ENCODE measurements at regions of chr3 and their contacts with region 1.

Region 1: DNA sequence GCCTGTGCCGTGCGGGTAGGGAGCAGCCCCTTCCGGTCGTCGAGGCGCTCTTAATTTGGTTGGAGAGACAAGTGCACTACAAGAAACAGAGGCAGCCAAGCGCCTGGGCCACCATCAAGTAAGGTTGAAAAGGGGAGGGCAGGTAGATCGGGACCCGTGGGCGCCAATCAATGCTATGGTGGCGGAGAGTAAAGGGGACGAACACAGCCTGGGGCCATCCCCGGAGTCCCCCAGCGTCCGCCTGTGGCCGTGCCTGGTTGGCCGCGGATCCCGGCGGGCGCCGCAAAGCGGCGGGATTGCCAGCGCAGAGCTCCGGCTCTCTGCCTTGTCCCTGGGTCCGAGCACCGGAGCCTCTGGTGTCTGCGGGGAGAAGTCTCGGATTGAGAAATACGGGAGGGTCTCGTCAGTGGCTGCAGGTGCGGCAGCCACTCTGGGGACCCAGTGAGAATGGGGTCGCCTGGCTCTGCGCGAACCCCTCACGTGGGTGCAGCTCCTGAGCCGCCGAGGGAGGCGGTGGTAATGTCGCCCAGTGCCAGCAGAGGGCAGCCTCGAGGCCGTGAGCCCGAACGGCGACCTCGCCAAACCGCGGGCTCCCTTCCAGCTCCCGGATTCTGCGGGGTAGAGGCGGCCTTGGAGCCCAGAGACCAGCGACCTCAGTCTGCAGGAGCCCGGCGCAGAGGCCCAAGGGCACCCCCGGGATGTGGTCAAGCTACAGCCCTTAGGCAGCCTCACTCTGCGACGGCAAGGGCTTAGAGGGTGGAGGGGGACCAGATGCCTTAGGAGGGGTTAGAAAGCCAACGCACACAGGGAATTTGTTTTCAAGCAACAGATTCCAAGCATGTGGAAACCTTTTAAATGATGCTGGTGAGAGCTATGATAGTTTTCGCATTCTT is 10.8 kb downstream of the FOXL2 start:
- DNase-seq: peak; percentile 85 to 93
- ATAC-seq: peak; percentile 91
- H3K4me3 ChIP-seq: no peak overlapping the region
- H3K27ac ChIP-seq: no peak overlapping the region
- H3K4me1 ChIP-seq: no peaks in the 10 kb centered on the region
- H3K27me3 ChIP-seq: no peaks in the 10 kb centered on the region

Region 2: DNA sequence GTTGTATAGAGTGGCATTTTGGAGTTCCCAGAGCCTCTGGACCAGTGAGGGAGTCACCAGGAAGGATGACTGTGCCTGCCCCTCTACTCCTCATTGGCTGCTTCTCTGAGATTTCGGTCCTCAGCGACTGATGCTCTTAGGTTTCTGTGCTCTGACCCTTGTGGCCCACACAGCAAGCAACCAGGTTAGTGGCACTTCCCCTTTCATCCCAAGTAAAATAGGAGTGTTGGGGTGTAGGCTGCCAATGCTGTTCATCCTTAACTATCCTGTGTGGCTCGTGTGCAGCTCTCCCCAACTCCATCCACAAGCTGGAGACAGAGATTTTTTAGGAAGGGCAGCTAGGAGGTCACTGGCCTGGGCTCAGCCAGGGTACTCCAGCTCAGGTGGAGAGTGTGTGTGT is 48.7 kb after region 1 on chr3:
- intact Hi-C with region 1: loop called in 1 of 2 experiments (anchors 5 kb)
- DNase-seq: no peak
- ATAC-seq: no peak
- H3K4me3 ChIP-seq: no peak overlapping the region
- H3K27ac ChIP-seq: no peak overlapping the region
- H3K4me1 ChIP-seq: no peaks in the 10 kb centered on the region
- H3K27me3 ChIP-seq: no peaks in the 10 kb centered on the region

Region 3: DNA sequence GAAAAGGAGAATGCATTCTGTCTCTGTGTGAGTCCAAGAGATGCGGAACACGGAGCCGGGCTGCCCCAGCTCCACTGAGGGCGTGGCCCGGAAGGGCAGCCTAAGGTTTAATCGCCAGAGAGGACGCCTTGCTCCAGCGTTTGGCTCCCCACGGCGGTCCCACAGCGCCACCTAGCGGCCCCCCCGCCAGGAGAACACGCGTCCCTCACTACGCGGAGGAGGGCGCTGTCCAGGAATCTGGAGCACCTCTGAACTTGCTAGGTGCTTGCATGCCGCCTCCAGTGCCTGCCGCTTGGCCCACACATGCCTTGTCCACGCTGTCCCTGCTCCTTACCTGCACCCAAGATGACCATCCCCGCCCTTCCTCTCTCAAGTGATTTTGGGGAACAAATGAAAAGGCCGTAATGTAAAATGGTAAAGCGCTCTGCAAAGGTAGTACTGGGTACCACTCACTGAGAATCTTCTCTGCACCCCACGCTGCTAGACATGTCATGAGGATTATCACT is 393.3 kb after region 1 on chr3:
- intact Hi-C with region 1: loop called in 1 of 2 experiments (anchors 2 kb)
- DNase-seq: peak; percentile 90 to 96
- ATAC-seq: peak; percentile 91
- H3K4me3 ChIP-seq: no peak overlapping the region
- H3K27ac ChIP-seq: no peak overlapping the region
- H3K4me1 ChIP-seq: no peaks in the 10 kb centered on the region
- H3K27me3 ChIP-seq: no peaks in the 10 kb centered on the region

Region 4: DNA sequence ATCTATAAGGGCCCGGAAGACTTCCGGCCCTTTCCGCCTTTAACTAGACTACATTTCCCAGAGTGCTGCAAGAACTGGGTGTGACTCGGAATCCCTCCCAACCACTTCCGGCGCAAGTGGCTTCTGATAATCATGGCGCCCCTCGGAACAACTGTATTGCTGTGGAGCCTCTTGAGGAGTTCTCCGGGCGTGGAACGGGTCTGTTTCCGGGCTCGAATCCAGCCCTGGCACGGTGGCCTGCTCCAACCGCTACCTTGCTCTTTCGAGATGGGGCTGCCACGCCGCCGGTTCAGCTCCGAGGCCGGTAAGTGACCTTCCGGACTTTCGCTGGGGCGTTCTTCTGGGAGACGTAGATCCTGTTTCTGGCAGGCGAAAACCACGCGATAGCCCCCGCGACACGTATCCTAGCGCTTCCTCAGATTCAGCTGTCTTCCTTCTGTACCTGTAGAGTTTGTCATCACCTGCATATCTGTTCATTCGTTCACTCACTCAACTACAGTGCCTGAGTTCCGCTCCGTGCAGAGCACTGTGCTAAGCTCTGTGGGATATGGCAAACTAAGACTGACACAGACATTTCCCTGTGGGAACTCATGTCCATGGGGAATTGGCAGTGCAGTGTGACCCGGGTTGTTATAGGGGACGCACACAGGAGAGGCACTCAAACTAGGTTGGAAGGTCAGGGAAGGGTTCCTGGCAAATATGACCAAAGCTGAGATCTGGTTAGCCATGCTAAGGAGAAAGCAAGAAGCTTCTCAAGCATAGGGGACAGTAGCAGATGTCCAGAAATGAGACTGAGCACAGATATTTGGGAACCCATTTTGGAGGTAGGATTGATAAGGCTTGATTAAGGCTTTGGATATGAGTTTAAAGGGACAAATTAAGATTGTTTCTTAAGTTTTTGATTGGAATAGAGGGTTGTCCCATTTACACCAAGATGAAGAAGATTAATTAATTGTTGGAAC is 408.1 kb after region 1 on chr3 and contains the start of gene MRPS22:
- intact Hi-C with region 1: loop called in 1 of 2 experiments (anchors 5 kb)
- DNase-seq: peak; percentile 88 to 89
- ATAC-seq: peak; percentile 93
- H3K4me3 ChIP-seq: peak within 1 kb of the TSS; percentile 93 to 100
- H3K27ac ChIP-seq: peak within 1 kb of the TSS in 1 of 2 donors; percentile 86
- H3K4me1 ChIP-seq: peaks cover 0 to 3% of the 10 kb centered on the region in 2 donors
- H3K27me3 ChIP-seq: no peaks in the 10 kb centered on the region
- total RNA-seq, gene MRPS22: 25.4 to 31.0 TPM

Measured in aorta (tissue), 5 donors.